ENCODE measurements at regions of chr16 and their contacts with region 1.

Region 1: GRCh38 chr16:3045357-3045728 is 1.0 kb upstream of the MMP25 start:
- DNase-seq: no peak
- H3K4me3 Mint-ChIP-seq: peak overlapping the region; percentile 83
- H3K27ac Mint-ChIP-seq: peak overlapping the region; percentile 77
- H3K4me1 Mint-ChIP-seq: peaks cover 21% of the 10 kb centered on the region
- H3K27me3 Mint-ChIP-seq: peaks cover 18% of the 10 kb centered on the region

Region 2: DNA sequence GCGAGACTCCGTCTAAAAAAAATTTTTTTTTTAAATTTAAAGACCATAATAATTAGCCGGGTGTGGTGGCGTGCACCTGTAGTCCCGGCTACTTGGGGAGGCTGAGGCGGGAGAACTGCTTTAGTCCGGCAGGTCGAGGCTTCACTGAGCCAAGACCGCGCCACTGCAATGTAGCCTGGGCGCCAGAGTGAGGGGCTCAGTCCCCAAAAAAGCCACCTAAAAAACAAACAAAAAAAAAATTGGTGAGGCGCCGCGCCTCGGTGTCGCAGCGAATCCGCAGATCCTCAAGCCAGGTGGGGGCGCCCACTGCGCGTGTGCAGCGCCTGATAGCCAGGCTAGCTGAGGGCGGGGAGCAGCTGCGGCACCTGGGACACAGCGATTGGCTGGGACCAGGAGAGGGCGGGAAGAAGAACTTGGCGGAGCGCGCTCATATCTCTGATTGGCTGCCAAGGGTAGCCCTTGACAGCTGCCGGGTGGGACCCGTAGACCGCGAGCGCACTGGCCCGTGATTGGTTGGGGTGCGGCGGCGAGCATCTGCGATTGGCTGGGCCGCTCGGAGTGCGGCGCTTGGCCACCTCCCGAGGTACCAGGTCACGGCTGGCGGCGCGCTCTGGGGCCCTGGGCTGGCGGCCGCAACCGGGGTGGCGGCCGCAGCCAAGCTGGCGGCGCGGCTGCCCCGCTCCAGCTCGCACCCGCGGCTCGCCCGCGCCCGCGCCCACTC is 41.6 kb before region 1 on chr16:
- intact Hi-C with region 1: no loop called
- DNase-seq: peak; percentile 98
- H3K4me3 Mint-ChIP-seq: peak overlapping the region; percentile 74
- H3K27ac Mint-ChIP-seq: peak overlapping the region; percentile 21
- H3K4me1 Mint-ChIP-seq: peaks cover 22% of the 10 kb centered on the region
- H3K27me3 Mint-ChIP-seq: peaks cover 18% of the 10 kb centered on the region

Region 3: DNA sequence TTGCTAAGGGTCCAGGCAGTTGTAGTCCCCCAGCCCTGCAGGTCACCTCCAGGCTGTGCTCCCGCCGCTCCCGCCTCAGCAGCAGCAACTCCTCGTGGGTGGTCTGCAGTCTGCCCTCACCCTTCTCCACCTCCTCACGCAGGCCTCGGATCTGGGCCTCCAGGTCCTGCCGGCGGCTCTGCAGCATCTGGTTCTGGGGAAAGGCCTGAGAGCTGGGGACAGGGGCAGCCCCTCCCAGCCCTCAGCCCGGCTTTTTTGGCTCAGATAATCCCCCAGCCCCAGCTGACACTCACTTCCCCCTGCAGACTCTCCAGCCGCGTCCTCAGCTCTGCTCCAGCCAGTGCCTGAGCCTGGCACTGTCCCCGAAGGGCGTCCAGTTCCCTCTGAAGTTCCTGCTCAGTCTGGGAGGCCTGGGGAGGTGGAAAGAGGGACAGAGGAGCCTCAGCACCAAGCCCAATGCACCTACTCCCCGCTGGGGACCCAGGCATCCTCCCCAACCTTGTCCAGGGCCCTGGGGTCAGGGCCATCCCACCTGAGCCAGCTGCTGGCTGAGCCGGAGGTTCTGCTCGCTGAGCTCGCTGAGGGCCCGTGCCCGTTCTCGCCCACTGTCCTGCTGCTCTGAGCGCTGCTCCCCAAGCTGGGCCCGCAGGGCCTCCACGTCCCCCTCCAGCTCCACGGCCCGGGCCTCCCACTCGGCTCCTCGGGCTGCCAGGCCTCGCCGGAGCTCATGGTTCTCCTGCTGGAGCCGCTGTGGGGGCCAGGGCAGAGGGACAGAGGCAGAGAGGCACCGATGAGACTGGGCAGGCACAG is 14.7 kb before region 1 on chr16:
- intact Hi-C with region 1: loop called (anchors 1 kb)
- DNase-seq: no peak
- H3K4me3 Mint-ChIP-seq: no peak overlapping the region
- H3K27ac Mint-ChIP-seq: peak overlapping the region; percentile 61
- H3K4me1 Mint-ChIP-seq: peaks cover 30% of the 10 kb centered on the region
- H3K27me3 Mint-ChIP-seq: peaks cover 45% of the 10 kb centered on the region

Region 4: DNA sequence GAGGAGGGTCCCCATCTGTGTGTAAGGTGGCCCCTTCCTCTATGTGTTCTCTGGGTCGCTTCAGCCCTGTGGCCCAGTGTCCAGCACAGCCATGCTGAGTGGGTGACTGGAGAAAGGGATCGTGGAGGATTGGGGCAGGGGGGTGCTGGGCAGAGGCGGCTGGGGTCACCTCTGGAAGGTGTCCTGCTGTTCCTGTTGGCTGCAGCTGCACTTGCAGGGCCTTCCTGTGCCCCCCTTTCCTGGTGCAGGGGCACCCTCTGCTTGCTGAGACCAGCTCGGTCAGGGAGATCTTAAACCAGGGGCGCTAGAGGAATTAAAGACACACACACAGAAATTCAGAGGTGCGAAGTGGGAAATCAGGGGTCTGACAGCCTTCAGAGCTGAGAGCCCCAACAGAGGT is 31.2 kb after region 1 on chr16:
- intact Hi-C with region 1: no loop called
- DNase-seq: no peak
- H3K4me3 Mint-ChIP-seq: peak overlapping the region; percentile 84
- H3K27ac Mint-ChIP-seq: peak overlapping the region; percentile 100
- H3K4me1 Mint-ChIP-seq: peaks cover 83% of the 10 kb centered on the region
- H3K27me3 Mint-ChIP-seq: peaks cover 2% of the 10 kb centered on the region